H1 (cell line): ENCODE measurements at regions of chr12 and their contacts with region 1.

Region 1: DNA sequence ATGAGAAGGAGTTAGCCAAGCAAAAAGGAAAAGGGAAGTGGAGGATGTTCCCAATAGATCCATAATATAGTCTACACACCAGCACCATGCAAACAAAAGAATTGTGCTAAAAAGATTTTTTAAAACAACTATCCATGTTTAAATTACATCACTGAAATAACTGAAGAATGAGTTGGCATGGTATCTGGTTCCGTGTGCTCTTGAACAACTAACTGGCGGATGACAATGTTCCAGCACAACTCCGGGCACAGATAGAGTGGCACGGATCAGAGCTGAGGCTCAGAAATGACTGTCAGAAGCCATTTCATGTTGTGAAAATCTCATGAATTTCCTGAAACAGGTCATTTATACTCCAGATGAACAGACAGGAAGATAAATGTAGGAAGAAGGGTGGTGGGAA is 153.1 kb downstream of the HMGA2 start:
- DNase-seq: no peak
- H3K4me3 ChIP-seq: no peak overlapping the region
- H3K27ac ChIP-seq: no peak overlapping the region
- H3K4me1 ChIP-seq: no peaks in the 10 kb centered on the region
- H3K27me3 ChIP-seq: no peaks in the 10 kb centered on the region
- CTCF ChIP-seq: no peak
- EP300 ChIP-seq: no peak
- POLR2A ChIP-seq: no peak
- RAD21 ChIP-seq: no peak

Region 2: DNA sequence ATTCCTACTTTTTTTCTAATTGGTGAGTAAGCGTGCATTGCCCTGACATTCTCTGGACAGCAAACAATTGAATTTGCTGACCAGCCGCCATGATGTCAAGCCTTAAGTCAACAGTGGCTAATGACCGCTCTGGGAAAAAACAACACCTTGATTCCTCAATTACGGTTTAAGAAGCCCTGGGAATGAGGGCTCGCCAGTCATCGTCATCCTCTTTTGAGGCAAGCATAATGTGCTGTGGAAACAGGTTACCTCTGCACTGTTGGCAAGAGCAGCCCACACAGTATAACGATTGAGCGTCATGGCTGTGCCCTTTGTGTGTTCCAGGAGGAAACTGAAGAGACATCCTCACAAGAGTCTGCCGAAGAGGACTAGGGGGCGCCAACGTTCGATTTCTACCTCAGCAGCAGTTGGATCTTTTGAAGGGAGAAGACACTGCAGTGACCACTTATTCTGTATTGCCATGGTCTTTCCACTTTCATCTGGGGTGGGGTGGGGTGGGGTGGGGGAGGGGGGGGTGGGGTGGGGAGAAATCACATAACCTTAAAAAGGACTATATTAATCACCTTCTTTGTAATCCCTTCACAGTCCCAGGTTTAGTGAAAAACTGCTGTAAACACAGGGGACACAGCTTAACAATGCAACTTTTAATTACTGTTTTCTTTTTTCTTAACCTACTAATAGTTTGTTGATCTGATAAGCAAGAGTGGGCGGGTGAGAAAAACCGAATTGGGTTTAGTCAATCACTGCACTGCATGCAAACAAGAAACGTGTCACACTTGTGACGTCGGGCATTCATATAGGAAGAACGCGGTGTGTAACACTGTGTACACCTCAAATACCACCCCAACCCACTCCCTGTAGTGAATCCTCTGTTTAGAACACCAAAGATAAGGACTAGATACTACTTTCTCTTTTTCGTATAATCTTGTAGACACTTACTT is 14.2 kb before region 1 on chr12:
- CTCF ChIA-PET with region 1: interaction called, 19 read pairs
- POLR2A ChIA-PET with region 1: no interaction called
- DNase-seq: peak in 1 of 2 experiments; percentile 77
- H3K4me3 ChIP-seq: no peak overlapping the region
- H3K27ac ChIP-seq: no peak overlapping the region
- H3K4me1 ChIP-seq: no peaks in the 10 kb centered on the region; a peak in 1 of 7 replicates
- H3K27me3 ChIP-seq: no peaks in the 10 kb centered on the region
- CTCF ChIP-seq: peak; percentile 67 to 78 (median 70)
- EP300 ChIP-seq: no peak
- POLR2A ChIP-seq: no peak
- RAD21 ChIP-seq: peak; percentile 33 to 61

Region 3: GRCh38 chr12:65993173-65993572 is 15.8 kb after region 1 on chr12:
- CTCF ChIA-PET with region 1: no interaction called
- POLR2A ChIA-PET with region 1: no interaction called
- DNase-seq: no peak
- H3K4me3 ChIP-seq: no peak overlapping the region
- H3K27ac ChIP-seq: no peak overlapping the region
- H3K4me1 ChIP-seq: no peaks in the 10 kb centered on the region
- H3K27me3 ChIP-seq: no peaks in the 10 kb centered on the region
- CTCF ChIP-seq: no peak
- EP300 ChIP-seq: no peak
- POLR2A ChIP-seq: no peak
- RAD21 ChIP-seq: no peak

Region 4: DNA sequence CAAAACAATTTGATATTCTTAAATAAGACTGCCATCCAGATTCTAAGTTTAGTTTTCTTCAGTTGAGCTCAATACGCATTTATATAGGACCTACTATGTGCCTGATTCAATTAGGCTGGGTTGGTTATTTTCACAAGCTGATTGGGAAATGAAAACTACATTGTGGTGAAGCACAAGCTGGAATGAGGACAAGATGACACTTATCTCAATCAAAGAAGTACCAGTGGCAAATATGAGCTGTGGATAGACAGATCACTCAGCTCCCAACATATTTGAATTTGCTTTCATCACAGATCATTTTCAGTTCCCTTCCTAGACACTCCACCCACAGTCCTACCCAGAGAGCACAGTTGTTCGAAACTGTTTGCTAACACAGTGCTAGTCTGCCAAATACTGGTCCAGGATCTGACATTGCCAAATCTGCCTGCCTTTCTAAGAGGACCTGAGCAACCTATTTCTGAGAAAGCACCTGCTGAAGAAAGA is 78.5 kb after region 1 on chr12:
- CTCF ChIA-PET with region 1: no interaction called
- POLR2A ChIA-PET with region 1: no interaction called
- DNase-seq: no peak
- H3K4me3 ChIP-seq: no peak overlapping the region
- H3K27ac ChIP-seq: no peak overlapping the region
- H3K4me1 ChIP-seq: peaks cover 0 to 3% (median 2%) of the 10 kb centered on the region in 4 experiments; a peak in 2 of 7 replicates
- H3K27me3 ChIP-seq: no peaks in the 10 kb centered on the region
- CTCF ChIP-seq: no peak
- EP300 ChIP-seq: no peak
- POLR2A ChIP-seq: no peak
- RAD21 ChIP-seq: no peak